Ovary (tissue), 10 donors: ENCODE measurements at regions of chr5 and their contacts with region 1.

Region 1: GRCh38 chr5:163505368-163506094 is at the start of gene MAT2B:
- DNase-seq: peak; percentile 94 to 97 (median 95)
- H3K4me3 ChIP-seq: peak within 1 kb of the TSS; percentile 85
- H3K27ac ChIP-seq: peak within 1 kb of the TSS; percentile 83 to 98
- H3K4me1 ChIP-seq: peaks cover 8% of the 10 kb centered on the region
- H3K27me3 ChIP-seq: no peaks in the 10 kb centered on the region
- CTCF ChIP-seq: peak in 2 of 3 donors; percentile 33 to 47
- EP300 ChIP-seq: no peak
- POLR2A ChIP-seq: peak; percentile 87
- total RNA-seq, gene MAT2B: 46.6 to 67.8 (median 54.0) TPM

Region 2: DNA sequence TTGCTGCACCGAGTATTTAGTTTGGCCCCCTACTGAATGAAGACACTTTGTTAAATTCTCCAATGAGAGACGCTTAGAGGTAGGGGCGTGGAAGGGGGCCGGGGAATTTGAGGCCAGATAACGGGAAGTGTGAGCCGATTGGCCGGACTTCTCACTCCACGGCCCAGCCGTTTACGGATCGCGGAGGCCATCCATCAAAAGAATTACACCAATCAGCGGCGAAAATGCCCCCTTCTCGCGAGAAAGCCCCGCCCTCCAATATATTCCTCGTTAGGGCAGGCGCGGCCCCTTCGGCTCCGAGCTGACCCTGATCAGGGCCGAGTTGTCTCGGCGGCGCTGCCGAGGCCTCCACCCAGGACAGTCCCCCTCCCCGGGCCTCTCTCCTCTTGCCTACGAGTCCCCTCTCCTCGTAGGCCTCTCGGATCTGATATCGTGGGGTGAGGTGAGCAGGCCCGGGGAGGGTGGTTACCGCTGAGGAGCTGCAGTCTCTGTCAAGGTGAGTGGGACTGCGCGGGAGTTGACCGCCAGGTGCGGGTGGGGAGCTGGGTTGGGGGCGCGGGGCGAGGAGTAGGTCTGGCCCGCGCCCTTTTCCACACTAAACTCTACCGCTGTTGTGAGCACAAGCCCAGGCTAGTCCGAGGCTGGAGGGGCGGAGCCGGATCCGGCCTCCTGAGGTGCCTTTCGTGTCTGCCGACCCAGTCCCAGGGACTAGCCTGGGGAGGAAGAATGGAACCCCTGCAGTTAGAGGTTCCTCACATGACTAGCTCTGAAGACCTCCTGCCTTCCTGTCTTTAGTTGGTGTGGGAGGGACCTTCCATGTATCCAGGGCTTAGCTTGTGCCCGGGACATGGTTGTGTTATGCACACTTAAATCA is 68.0 kb before region 1 on chr5 and contains the start of gene CCNG1:
- intact Hi-C with region 1: loop called in 1 of 4 experiments (anchors 10 kb)
- DNase-seq: peak; percentile 92 to 95 (median 93)
- H3K4me3 ChIP-seq: peak within 1 kb of the TSS; percentile 95
- H3K27ac ChIP-seq: peak within 1 kb of the TSS; percentile 25 to 88
- H3K4me1 ChIP-seq: peaks cover 9% of the 10 kb centered on the region
- H3K27me3 ChIP-seq: no peaks in the 10 kb centered on the region
- CTCF ChIP-seq: no peak
- EP300 ChIP-seq: no peak
- POLR2A ChIP-seq: peak; percentile 29
- total RNA-seq, gene CCNG1: 155 to 250 (median 211) TPM

Region 3: GRCh38 chr5:163459922-163460766 is 45.4 kb before region 1 on chr5 and contains the starts of genes HMMR and NUDCD2:
- intact Hi-C with region 1: loop called in 2 of 4 experiments (anchors 5 kb)
- DNase-seq: peak; percentile 95 to 98 (median 97)
- H3K4me3 ChIP-seq: peak within 1 kb of the TSS; percentile 91
- H3K27ac ChIP-seq: peak within 1 kb of the TSS; percentile 91 to 94
- H3K4me1 ChIP-seq: peaks cover 2% of the 10 kb centered on the region
- H3K27me3 ChIP-seq: no peaks in the 10 kb centered on the region
- CTCF ChIP-seq: peak in 2 of 3 donors; percentile 8 to 46
- EP300 ChIP-seq: peak; percentile 46
- POLR2A ChIP-seq: peak; percentile 77
- total RNA-seq, gene HMMR: 0.10 to 1.4 (median 0.27) TPM in 6 of 7 donors, not detected in the other
- total RNA-seq, gene NUDCD2: 6.8 to 26.0 (median 19.6) TPM

Region 4: DNA sequence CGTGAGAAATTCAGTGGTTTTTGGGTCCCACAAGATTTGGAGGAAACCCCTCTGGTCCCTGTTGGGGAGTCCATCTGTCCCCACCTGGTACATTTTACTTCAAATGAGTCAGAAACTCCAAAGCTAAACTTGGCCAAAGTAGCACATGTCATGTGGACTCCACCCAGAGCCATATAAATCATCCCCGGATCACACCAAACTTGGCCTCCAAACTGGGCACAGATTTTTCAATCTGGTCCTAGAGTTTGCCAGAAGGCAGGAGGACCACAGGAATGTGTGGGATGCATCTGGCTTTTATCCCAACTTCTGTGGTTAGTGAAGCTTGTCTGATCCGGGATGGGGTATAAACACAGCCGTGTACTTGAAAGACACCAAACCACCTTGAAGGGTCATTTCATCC is 66.2 kb after region 1 on chr5:
- intact Hi-C with region 1: no loop called
- DNase-seq: peak in 3 of 5 donors; percentile 11 to 19 (median 14)
- H3K4me3 ChIP-seq: no peak overlapping the region
- H3K27ac ChIP-seq: no peak overlapping the region
- H3K4me1 ChIP-seq: peaks cover 4% of the 10 kb centered on the region
- H3K27me3 ChIP-seq: no peaks in the 10 kb centered on the region
- CTCF ChIP-seq: no peak
- EP300 ChIP-seq: no peak
- POLR2A ChIP-seq: no peak

Region 5: GRCh38 chr5:163612358-163613149 is 107.0 kb after region 1 on chr5:
- intact Hi-C with region 1: no loop called
- DNase-seq: no peak
- H3K4me3 ChIP-seq: no peak overlapping the region
- H3K27ac ChIP-seq: no peak overlapping the region
- H3K4me1 ChIP-seq: peaks cover 2% of the 10 kb centered on the region
- H3K27me3 ChIP-seq: no peaks in the 10 kb centered on the region
- CTCF ChIP-seq: no peak
- EP300 ChIP-seq: no peak
- POLR2A ChIP-seq: no peak